Naive thymus-derived CD4-positive, alpha-beta T cell (primary cell): ENCODE measurements at regions of chr15 and their contacts with region 1.

Region 1: DNA sequence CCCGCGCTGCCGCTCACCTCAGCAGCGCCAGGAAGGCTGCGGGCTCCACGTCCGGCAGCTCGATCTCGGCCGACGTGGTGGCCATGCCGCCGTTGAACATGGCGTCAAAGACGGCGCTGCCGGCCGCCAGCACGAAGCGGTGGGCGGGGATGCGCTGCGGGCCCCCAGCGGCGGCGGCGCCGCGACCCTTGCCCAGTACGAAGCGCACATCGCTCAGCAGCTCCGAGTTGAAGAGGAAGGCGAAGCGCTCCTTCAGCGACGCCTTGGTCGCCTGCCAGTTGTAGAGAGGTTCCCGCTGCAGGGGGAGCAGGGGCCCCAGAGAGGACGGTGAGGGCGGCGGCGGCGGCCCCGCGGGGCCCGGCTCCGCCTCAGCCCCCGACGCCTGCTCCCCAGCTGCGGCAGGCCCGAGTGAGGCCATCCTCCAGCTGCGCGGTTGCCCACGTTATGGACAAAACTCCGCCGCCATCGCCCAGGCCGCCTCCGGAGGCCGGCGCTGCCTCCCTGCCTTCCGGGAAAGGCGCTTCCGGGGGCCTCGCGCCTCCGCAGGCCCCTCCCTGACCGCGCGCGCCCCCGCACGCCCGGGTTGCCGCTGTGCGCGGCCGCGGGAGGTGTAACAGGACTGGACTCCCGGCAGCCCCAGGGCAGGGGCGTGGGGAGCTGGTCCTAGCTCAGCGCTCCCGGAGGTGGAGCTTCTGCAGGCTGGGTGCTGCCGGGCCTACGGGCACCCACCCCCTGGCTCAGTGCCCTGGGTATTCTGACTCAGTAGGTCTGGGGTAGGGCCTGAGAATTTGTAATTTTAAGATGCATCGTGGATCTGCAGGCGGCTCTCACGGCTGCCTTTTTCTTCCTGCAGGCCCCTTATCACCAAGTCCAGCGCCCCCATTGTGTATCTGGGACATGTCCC is at the start of gene BTBD1:
- DNase-seq: peak; percentile 67 to 93 (median 76)
- ATAC-seq: peak; percentile 88
- H3K4me3 ChIP-seq: peak within 1 kb of the TSS; percentile 87
- H3K4me3 Mint-ChIP-seq: peak within 1 kb of the TSS in 7 of 10 donors; percentile 67 to 89 (median 83)
- H3K27ac ChIP-seq: peak within 1 kb of the TSS; percentile 84
- H3K27ac Mint-ChIP-seq: peak within 1 kb of the TSS; percentile 60 to 91 (median 87)
- H3K4me1 ChIP-seq: peaks cover 32 to 35% of the 10 kb centered on the region in 2 donors
- H3K4me1 Mint-ChIP-seq: peaks cover 8 to 18% (median 11%) of the 10 kb centered on the region in 7 donors
- H3K27me3 ChIP-seq: no peaks in the 10 kb centered on the region
- H3K27me3 Mint-ChIP-seq: peaks cover 0 to 1% (median 0%) of the 10 kb centered on the region in 5 donors
- total RNA-seq, gene BTBD1: 35.0 to 57.6 (median 36.4) TPM

Region 2: GRCh38 chr15:82680200-82681102 is 386.5 kb before region 1 on chr15:
- CTCF ChIA-PET with region 1: no interaction called
- POLR2A ChIA-PET with region 1: interaction called, 3 read pairs
- intact Hi-C with region 1: loop called in 1 of 2 experiments (anchors 2 kb)
- DNase-seq: peak; percentile 47 to 88 (median 82)
- ATAC-seq: peak; percentile 98
- H3K4me3 ChIP-seq: peak overlapping the region; percentile 97
- H3K4me3 Mint-ChIP-seq: peak overlapping the region; percentile 82 to 96 (median 93)
- H3K27ac ChIP-seq: peak overlapping the region; percentile 83
- H3K27ac Mint-ChIP-seq: peak overlapping the region in 8 of 9 donors; percentile 91 to 97 (median 94)
- H3K4me1 ChIP-seq: peaks cover 9% of the 10 kb centered on the region in 2 donors
- H3K4me1 Mint-ChIP-seq: peaks cover 0 to 19% (median 14%) of the 10 kb centered on the region in 7 donors
- H3K27me3 ChIP-seq: no peaks in the 10 kb centered on the region
- H3K27me3 Mint-ChIP-seq: peaks cover 0 to 42% (median 0%) of the 10 kb centered on the region in 5 donors

Region 3: GRCh38 chr15:82749951-82750830 is 316.8 kb before region 1 on chr15:
- CTCF ChIA-PET with region 1: no interaction called
- POLR2A ChIA-PET with region 1: no interaction called
- intact Hi-C with region 1: loop called (anchors 2 to 5 kb)
- DNase-seq: peak; percentile 51 to 84 (median 70)
- ATAC-seq: peak; percentile 96
- H3K4me3 ChIP-seq: peak overlapping the region; percentile 88
- H3K4me3 Mint-ChIP-seq: peak overlapping the region; percentile 93 to 100 (median 98)
- H3K27ac ChIP-seq: peak overlapping the region; percentile 78
- H3K27ac Mint-ChIP-seq: peak overlapping the region; percentile 89 to 98 (median 95)
- H3K4me1 ChIP-seq: peaks cover 10 to 15% of the 10 kb centered on the region in 2 donors
- H3K4me1 Mint-ChIP-seq: peaks cover 26 to 69% (median 57%) of the 10 kb centered on the region in 7 donors
- H3K27me3 ChIP-seq: no peaks in the 10 kb centered on the region
- H3K27me3 Mint-ChIP-seq: no peaks in the 10 kb centered on the region

Region 4: DNA sequence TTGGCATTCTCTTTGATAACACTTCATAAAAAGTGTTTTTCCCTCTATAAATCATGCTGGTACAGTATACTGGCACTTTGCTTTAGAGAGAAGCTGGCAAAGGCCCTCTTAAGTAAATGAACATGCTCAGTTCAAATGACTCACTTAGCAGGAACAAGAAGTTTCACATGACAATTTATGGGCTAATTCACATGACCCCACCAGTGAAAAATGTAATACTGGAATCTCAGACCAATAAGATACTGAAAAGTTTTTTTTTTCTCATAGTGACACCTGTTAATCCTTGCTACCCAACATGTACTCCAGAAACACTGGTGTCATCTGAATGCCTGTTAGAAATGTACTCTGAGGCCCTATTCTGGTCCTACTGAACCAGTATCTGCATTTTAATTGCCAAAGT is 13.8 kb before region 1 on chr15:
- CTCF ChIA-PET with region 1: no interaction called
- POLR2A ChIA-PET with region 1: interaction called, 8 read pairs
- intact Hi-C with region 1: loop called in 1 of 2 experiments (anchors 2 kb)
- DNase-seq: no peak
- ATAC-seq: peak; percentile 26
- H3K4me3 ChIP-seq: no peak overlapping the region
- H3K4me3 Mint-ChIP-seq: no peak overlapping the region
- H3K27ac ChIP-seq: no peak overlapping the region
- H3K27ac Mint-ChIP-seq: no peak overlapping the region
- H3K4me1 ChIP-seq: peaks cover 0 to 8% of the 10 kb centered on the region in 2 donors
- H3K4me1 Mint-ChIP-seq: peaks cover 9 to 28% (median 21%) of the 10 kb centered on the region in 7 donors
- H3K27me3 ChIP-seq: no peaks in the 10 kb centered on the region
- H3K27me3 Mint-ChIP-seq: no peaks in the 10 kb centered on the region

Region 5: GRCh38 chr15:83108266-83109226 is 41.6 kb after region 1 on chr15:
- CTCF ChIA-PET with region 1: no interaction called
- POLR2A ChIA-PET with region 1: no interaction called
- intact Hi-C with region 1: loop called in 1 of 2 experiments (anchors 1 kb)
- DNase-seq: peak in 3 of 9 donors; percentile 15 to 30 (median 19)
- ATAC-seq: peak; percentile 89
- H3K4me3 ChIP-seq: peak overlapping the region; percentile 22
- H3K4me3 Mint-ChIP-seq: peak overlapping the region; percentile 68 to 97 (median 76)
- H3K27ac ChIP-seq: no peak overlapping the region
- H3K27ac Mint-ChIP-seq: peak overlapping the region in 1 of 9 donors; percentile 90
- H3K4me1 ChIP-seq: peaks cover 0 to 10% of the 10 kb centered on the region in 2 donors
- H3K4me1 Mint-ChIP-seq: peaks cover 11 to 38% (median 17%) of the 10 kb centered on the region in 7 donors
- H3K27me3 ChIP-seq: no peaks in the 10 kb centered on the region
- H3K27me3 Mint-ChIP-seq: peaks cover 21 to 59% (median 53%) of the 10 kb centered on the region in 5 donors

Region 6: GRCh38 chr15:83207622-83208411 is 140.8 kb after region 1 on chr15 and contains the start of gene HDGFL3:
- CTCF ChIA-PET with region 1: no interaction called
- POLR2A ChIA-PET with region 1: no interaction called
- intact Hi-C with region 1: loop called (anchors 2 to 5 kb)
- DNase-seq: peak in 6 of 9 donors; percentile 5 to 53 (median 24)
- ATAC-seq: peak; percentile 55
- H3K4me3 ChIP-seq: no peak within 1 kb of the TSS
- H3K4me3 Mint-ChIP-seq: peak within 1 kb of the TSS; percentile 85 to 97 (median 93)
- H3K27ac ChIP-seq: peak within 1 kb of the TSS; percentile 51
- H3K27ac Mint-ChIP-seq: peak within 1 kb of the TSS in 5 of 9 donors; percentile 78 to 86 (median 85)
- H3K4me1 ChIP-seq: peaks cover 0 to 3% of the 10 kb centered on the region in 2 donors
- H3K4me1 Mint-ChIP-seq: peaks cover 0 to 18% (median 7%) of the 10 kb centered on the region in 7 donors
- H3K27me3 ChIP-seq: peaks cover 3% of the 10 kb centered on the region in 2 donors
- H3K27me3 Mint-ChIP-seq: peaks cover 14 to 37% (median 19%) of the 10 kb centered on the region in 5 donors
- total RNA-seq, gene HDGFL3: 2.1 to 50.1 (median 3.6) TPM